ENCODE measurements at regions of chr5 and their contacts with region 1.

Region 1: DNA sequence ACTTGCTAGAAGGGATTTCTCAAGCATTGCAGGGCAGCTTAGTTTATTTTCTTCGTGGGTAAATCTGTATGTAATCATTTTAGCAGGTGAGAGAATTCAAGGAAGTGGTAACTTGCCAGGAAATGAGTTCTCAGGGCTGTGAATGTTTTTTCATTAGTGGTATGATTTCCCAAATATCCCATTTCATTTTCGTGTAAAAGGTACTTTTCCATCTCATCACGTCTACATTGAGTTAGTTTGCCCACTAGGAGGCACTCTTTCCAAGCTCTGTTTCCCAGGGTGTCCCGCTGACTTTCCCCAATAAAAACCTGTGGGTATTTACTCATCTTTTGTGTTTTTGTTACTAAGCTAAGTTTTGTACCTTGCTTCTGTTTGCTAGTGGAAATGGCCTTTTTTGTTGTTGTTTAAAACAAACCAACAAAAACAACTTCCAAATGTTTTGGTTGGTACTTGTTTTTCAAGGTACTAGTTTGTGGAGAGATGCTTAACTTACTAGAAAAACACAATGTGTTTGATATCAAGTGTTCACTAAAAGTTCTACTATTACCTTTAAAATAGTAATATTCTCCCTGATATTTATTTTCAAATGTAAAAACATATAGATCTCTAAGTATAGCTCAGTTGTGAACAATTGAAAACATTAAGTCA is 373.6 kb downstream of the ADGRV1 start:
- DNase-seq: peak; percentile 93
- H3K4me3 ChIP-seq: no peak overlapping the region
- H3K27ac ChIP-seq: no peak overlapping the region
- H3K4me1 ChIP-seq: peaks cover 5% of the 10 kb centered on the region
- H3K27me3 ChIP-seq: no peaks in the 10 kb centered on the region
- CTCF ChIP-seq: peak; percentile 64 to 71
- POLR2A ChIP-seq: no peak

Region 2: GRCh38 chr5:90866333-90866732 is 65.8 kb before region 1 on chr5:
- CTCF ChIA-PET with region 1: interaction called, 72 read pairs
- POLR2A ChIA-PET with region 1: no interaction called
- dilution Hi-C with region 1: no loop called
- intact Hi-C with region 1: loop called (anchors 2 kb)
- DNase-seq: peak; percentile 71
- H3K4me3 ChIP-seq: no peak overlapping the region
- H3K27ac ChIP-seq: no peak overlapping the region
- H3K4me1 ChIP-seq: no peaks in the 10 kb centered on the region
- H3K27me3 ChIP-seq: no peaks in the 10 kb centered on the region
- CTCF ChIP-seq: peak; percentile 4 to 5
- POLR2A ChIP-seq: no peak

Region 3: DNA sequence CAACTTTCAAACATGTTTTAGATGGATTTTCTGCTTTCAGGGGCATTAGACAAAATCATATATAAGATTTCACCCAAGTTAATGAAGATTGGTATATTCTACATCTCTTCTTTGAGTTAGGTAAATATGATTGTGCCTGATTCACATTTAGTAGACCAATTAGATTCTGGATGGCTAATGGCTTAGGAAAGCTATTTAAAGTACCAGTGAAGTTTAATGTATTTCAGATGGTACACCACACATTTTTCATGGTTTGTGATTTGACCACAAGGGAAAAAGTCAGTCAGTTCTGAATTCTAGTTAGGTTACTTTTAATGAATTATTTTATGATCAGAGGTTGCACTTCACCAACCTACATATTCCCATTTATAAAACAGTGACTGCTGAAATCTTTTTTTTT is 36.1 kb after region 1 on chr5:
- CTCF ChIA-PET with region 1: interaction called, 11 read pairs
- POLR2A ChIA-PET with region 1: no interaction called
- dilution Hi-C with region 1: no loop called
- intact Hi-C with region 1: loop called (anchors 2 kb)
- DNase-seq: no peak
- H3K4me3 ChIP-seq: no peak overlapping the region
- H3K27ac ChIP-seq: peak overlapping the region; percentile 57
- H3K4me1 ChIP-seq: peaks cover 32% of the 10 kb centered on the region
- H3K27me3 ChIP-seq: no peaks in the 10 kb centered on the region
- CTCF ChIP-seq: no peak
- POLR2A ChIP-seq: no peak

Region 4: DNA sequence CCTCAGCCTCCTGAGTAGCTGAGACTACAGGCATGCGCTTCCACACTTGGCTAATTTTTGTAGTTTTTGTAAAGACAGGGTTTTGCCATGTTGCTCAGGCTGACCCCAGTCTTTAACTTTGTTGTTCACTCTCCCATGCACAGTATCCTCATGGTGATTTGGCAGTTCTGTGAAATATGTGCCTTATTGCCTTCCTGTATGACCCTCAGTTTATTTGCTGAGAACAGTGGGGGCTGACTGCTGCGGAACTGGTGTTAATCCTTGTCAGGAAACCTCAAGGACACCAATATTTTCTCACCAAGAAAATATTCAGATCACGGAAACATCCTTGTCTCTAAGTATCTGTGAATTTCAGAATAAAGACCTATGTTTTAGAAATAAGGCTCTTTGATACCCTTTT is 163.1 kb after region 1 on chr5:
- CTCF ChIA-PET with region 1: interaction called, 19 read pairs
- POLR2A ChIA-PET with region 1: no interaction called
- dilution Hi-C with region 1: no loop called
- intact Hi-C with region 1: loop called (anchors 1 kb)
- DNase-seq: peak; percentile 58
- H3K4me3 ChIP-seq: no peak overlapping the region
- H3K27ac ChIP-seq: no peak overlapping the region
- H3K4me1 ChIP-seq: no peaks in the 10 kb centered on the region
- H3K27me3 ChIP-seq: no peaks in the 10 kb centered on the region
- CTCF ChIP-seq: no peak
- POLR2A ChIP-seq: no peak

Region 5: DNA sequence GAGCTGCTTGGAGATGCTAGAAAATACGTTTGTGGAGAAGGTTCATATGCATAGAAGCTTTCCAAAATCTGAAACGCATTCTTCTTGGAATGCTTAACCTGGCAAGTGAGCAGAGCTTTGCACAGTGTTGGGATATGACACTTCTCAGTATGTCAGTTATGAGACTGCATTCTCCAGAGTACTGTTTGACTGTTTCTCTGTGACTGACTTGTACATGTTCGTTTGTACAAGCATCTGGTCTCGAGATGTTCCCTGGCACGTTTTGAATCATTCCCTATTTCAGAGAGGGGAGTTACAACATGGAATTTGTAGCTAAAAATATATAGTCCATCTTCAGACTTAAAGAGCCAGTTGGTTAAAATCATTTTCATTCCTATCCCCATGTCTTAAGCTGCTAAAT is 178.5 kb after region 1 on chr5:
- CTCF ChIA-PET with region 1: interaction called, 13 read pairs
- POLR2A ChIA-PET with region 1: no interaction called
- dilution Hi-C with region 1: no loop called
- intact Hi-C with region 1: no loop called
- DNase-seq: no peak
- H3K4me3 ChIP-seq: no peak overlapping the region
- H3K27ac ChIP-seq: no peak overlapping the region
- H3K4me1 ChIP-seq: peaks cover 8% of the 10 kb centered on the region
- H3K27me3 ChIP-seq: no peaks in the 10 kb centered on the region
- CTCF ChIP-seq: no peak
- POLR2A ChIP-seq: no peak

Region 6: DNA sequence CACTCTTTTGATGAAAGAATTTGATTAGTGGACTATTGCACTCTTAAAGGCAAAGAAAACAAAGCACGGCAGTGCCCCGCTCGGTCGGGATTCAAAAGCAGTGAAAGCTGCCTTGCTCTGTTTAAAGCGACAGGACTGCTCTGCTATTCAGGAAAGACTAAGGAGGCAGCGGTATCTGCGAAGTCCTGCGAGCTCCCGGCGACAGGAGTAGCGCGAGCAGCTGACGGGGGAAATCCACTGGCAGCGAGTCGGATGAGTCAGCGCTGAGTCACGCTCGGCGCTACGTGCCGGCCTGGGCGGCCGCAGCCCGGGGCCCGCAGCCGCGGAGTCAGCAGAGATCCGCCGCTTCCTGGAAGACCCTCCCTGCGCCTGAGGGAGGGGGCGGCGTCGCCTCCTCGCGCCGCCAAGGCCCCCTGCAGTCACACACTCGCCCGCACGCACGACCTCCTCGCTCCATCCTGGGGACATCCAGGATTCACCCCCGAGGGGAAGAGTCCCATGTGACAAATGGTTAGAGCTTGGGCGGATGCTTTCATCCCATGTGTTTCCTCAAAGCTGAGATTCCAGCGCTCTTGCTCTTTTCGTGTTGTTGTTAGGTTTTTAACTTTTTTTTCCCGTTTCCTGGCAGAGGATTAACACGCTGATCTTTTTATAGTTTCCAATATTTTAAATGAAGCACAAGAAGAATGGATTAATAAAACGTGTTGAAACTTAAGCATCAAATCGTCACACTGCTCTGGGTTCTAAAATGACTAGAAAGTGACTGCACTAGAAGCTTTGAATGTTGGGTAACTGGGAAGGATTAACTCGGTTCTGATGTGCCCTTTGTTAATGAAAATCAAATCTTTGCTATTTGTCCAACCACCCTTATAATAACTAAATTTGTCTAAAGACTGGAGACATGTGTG is 348.4 kb after region 1 on chr5:
- CTCF ChIA-PET with region 1: interaction called, 7 read pairs
- POLR2A ChIA-PET with region 1: no interaction called
- dilution Hi-C with region 1: no loop called
- intact Hi-C with region 1: loop called (anchors 1 kb)
- DNase-seq: peak; percentile 98
- H3K4me3 ChIP-seq: peak overlapping the region; percentile 2 to 71 (median 39)
- H3K27ac ChIP-seq: peak overlapping the region; percentile 99
- H3K4me1 ChIP-seq: peaks cover 24% of the 10 kb centered on the region
- H3K27me3 ChIP-seq: no peaks in the 10 kb centered on the region
- CTCF ChIP-seq: no peak
- POLR2A ChIP-seq: peak; percentile 86

Measured in endothelial cell of umbilical vein (primary cell).